Activated naive CD4-positive, alpha-beta T cell treated with anti-CD3 and anti-CD28 coated beads, Interleukin-2, amount 10 ng/mL, durations not matched to agents 7 days and 5 days (primary cell): ENCODE measurements at regions of chr11 and their contacts with region 1.

Region 1: DNA sequence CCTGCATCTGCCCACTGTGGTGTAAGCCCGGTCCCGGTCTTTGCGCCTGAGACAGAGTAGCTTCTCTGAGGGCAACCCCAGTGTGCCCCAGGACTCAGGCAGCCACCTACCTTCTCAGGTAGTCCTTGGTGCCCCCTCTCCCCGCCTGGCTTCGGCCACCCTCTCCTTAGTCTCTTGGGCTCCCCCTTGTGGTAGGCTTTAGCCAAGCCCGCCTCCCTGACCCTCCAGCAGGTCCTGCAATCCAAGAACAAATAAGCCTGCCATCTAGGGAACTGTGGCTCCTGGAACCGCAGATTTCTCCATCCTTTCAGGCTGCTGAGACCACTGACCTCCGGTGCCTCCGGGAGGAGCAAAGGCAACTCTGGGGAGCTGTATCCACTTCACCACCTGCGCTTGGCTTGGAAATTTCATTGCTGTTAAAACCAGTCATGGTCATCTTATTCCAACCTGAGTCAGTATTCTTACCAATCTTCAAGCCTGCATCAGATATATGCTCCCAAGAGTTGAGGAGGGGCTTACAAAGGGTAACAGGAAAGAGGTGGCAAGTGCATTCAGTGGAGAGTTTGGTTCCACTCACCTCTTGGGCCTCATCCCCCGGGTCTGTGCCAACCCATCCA is 52.8 kb upstream of the TENM4 start:
- DNase-seq: peak; percentile 53
- H3K4me3 Mint-ChIP-seq: no peak overlapping the region
- H3K27ac Mint-ChIP-seq: no peak overlapping the region
- H3K4me1 Mint-ChIP-seq: no peaks in the 10 kb centered on the region
- H3K27me3 Mint-ChIP-seq: no peaks in the 10 kb centered on the region

Region 2: DNA sequence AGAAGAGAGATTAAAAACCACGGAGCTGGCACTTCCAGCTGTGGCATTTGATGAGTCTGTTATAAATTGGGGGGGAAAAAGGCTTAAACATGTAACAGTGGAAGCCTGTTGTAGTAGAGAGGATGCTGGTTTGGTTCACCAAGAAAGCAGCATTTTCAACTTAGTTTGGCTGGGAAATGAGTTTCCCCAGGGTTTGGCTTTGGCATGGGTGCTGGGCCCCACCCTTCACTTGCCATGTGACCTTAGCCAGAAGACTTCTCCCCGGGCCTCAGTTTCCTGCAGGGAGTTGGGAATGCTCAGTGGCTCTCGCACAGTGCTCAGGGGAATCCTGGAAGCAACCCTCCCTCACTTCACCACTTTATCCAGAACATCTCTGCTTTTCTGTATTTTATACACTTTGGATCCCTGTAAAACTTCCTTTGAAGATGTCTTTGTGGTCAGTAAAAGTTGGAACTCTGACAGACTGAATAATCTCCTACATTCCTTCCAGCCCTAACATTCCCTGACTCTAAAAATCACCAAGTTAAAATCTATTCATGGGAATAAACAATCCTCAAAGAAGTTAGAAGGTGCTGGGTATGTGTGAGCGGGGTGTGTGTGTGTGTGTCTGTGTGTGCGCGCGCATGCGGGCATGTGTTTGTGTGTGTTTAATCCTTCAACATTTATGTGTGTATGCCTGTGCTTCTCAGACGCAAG is 218.9 kb before region 1 on chr11:
- CTCF ChIA-PET with region 1: no interaction called
- DNase-seq: no peak
- H3K4me3 Mint-ChIP-seq: no peak overlapping the region
- H3K27ac Mint-ChIP-seq: no peak overlapping the region
- H3K4me1 Mint-ChIP-seq: no peaks in the 10 kb centered on the region
- H3K27me3 Mint-ChIP-seq: no peaks in the 10 kb centered on the region

Region 3: GRCh38 chr11:79388201-79388600 is 105.5 kb before region 1 on chr11:
- CTCF ChIA-PET with region 1: no interaction called
- DNase-seq: no peak
- H3K4me3 Mint-ChIP-seq: no peak overlapping the region
- H3K27ac Mint-ChIP-seq: no peak overlapping the region
- H3K4me1 Mint-ChIP-seq: no peaks in the 10 kb centered on the region
- H3K27me3 Mint-ChIP-seq: peaks cover 5% of the 10 kb centered on the region

Region 4: DNA sequence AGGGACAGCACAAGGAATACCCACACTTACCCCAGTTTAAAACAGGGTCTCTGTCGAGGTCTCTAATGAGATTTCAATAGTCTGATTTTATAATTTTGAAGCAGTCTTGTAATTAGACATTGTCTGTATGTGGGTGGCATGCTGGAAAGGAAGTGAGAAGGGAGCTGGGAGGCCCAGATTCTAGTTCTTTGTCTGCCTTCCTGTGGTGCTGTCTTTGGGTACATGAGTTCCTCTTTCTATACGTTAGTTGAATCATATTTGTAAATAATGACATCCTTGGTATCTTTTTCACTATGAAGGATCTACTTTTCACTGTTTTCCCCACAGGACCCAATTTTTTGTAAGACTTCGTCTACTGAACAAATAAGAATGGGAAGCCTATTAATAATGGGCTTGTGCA is 10.9 kb before region 1 on chr11:
- CTCF ChIA-PET with region 1: interaction called, 11 read pairs
- DNase-seq: no peak
- H3K4me3 Mint-ChIP-seq: no peak overlapping the region
- H3K27ac Mint-ChIP-seq: no peak overlapping the region
- H3K4me1 Mint-ChIP-seq: no peaks in the 10 kb centered on the region
- H3K27me3 Mint-ChIP-seq: peaks cover 7% of the 10 kb centered on the region